Activated CD4-positive, alpha-beta T cell treated with anti-CD3 and anti-CD28 coated beads, Interleukin-2, amount 10 ng/mL, durations not matched to agents 7 days and 5 days (primary cell): ENCODE measurements at regions of chr22 and their contacts with region 1.

Region 1: DNA sequence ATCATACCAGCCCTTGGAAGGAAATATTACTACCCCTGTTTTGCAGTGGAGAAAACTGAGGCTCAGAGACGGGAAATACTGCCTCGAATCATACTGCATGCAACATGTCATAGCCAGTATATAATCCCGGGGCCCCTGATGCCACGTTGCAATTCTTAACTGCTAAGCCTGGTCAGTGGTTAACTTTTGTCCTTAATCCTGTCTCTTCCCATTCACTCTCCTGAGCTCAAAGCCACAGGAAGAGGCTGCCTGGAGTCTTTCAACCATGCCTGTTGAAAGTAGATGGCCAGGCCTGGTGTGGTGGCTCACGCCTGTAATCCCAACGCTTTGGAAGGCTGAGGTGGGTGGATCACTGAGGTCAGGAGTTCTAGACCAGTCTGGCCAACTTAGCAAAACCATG is 166.6 kb downstream of the MIAT start:
- DNase-seq: no peak
- H3K4me3 Mint-ChIP-seq: no peak overlapping the region
- H3K27ac Mint-ChIP-seq: no peak overlapping the region
- H3K4me1 Mint-ChIP-seq: no peaks in the 10 kb centered on the region
- H3K27me3 Mint-ChIP-seq: no peaks in the 10 kb centered on the region

Region 2: DNA sequence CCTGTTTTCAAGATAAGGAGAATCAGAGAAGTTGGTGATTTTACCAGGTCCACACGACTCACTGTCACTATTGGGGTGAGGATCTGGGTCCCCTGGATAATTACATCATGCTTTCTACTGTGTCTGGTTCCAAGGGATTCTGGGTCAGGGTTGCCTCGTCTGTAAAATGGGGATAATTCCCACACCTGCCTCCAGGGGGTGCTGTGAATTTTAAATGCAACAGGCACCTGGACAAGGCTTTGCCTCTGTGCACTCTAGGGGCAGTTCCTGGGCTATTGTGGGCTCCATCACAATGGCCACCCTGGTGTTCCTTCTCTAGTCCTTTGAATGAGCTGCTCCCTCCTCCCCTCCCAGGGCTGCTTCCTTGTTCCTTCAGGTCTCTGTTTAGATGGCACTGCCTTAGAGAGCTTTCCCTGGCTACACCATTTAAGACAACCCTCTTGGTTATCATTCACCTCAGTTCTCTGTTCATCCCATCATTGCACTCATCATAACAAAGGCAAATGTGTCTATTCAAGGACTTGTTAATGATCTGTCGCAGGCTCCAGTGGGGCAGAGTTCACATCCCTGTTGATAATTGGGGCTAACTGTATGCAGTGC is 12.1 kb after region 1 on chr22:
- CTCF ChIA-PET with region 1: no interaction called
- POLR2A ChIA-PET with region 1: interaction called, 10 read pairs
- DNase-seq: peak; percentile 68
- H3K4me3 Mint-ChIP-seq: no peak overlapping the region
- H3K27ac Mint-ChIP-seq: no peak overlapping the region
- H3K4me1 Mint-ChIP-seq: no peaks in the 10 kb centered on the region
- H3K27me3 Mint-ChIP-seq: no peaks in the 10 kb centered on the region